HepG2 (cell line): ENCODE measurements at regions of chr6 and their contacts with region 1.

Region 1: GRCh38 chr6:154928325-154928922 is 66.7 kb upstream of the TIAM2 start:
- DNase-seq: peak; percentile 73
- ATAC-seq: peak; percentile 78
- H3K4me3 ChIP-seq: no peak overlapping the region
- H3K27ac ChIP-seq: no peak overlapping the region
- H3K4me1 ChIP-seq: peaks cover 25% of the 10 kb centered on the region
- H3K27me3 ChIP-seq: no peaks in the 10 kb centered on the region
- CTCF ChIP-seq: peak; percentile 93
- EP300 ChIP-seq: no peak
- POLR2A ChIP-seq: no peak
- RAD21 ChIP-seq: peak; percentile 95

Region 2: GRCh38 chr6:154675602-154676088 is 252.8 kb before region 1 on chr6:
- CTCF ChIA-PET with region 1: interaction called, 3 read pairs
- POLR2A ChIA-PET with region 1: no interaction called
- in situ Hi-C with region 1: no loop called
- intact Hi-C with region 1: loop called (anchors 1 kb)
- DNase-seq: peak; percentile 95
- ATAC-seq: peak; percentile 99
- H3K4me3 ChIP-seq: no peak overlapping the region
- H3K27ac ChIP-seq: no peak overlapping the region
- H3K4me1 ChIP-seq: peaks cover 5% of the 10 kb centered on the region; the same call in 1 of the 2 replicates
- H3K27me3 ChIP-seq: no peaks in the 10 kb centered on the region
- CTCF ChIP-seq: peak; percentile 98
- EP300 ChIP-seq: no peak
- POLR2A ChIP-seq: no peak
- RAD21 ChIP-seq: peak; percentile 97

Region 3: GRCh38 chr6:154960299-154960843 is 31.9 kb after region 1 on chr6:
- CTCF ChIA-PET with region 1: no interaction called
- POLR2A ChIA-PET with region 1: interaction called, 6 read pairs
- in situ Hi-C with region 1: no loop called
- intact Hi-C with region 1: loop called (anchors 2 kb)
- DNase-seq: peak; percentile 93
- ATAC-seq: peak; percentile 81
- H3K4me3 ChIP-seq: peak overlapping the region in 1 of 3 experiments; percentile 27; a peak in 2 of 6 replicates
- H3K27ac ChIP-seq: peak overlapping the region; percentile 57
- H3K4me1 ChIP-seq: peaks cover 65% of the 10 kb centered on the region
- H3K27me3 ChIP-seq: no peaks in the 10 kb centered on the region
- CTCF ChIP-seq: no peak
- EP300 ChIP-seq: peak in 1 of 2 experiments; percentile 79; a peak in 2 of 4 replicates
- POLR2A ChIP-seq: 0 out of 4 replicates have a peak, but pooled peaks of 1 of the 2 experiments have one; percentile 14
- RAD21 ChIP-seq: peak; percentile 29; the same call in 1 of the 2 replicates

Region 4: GRCh38 chr6:155003476-155003875 is 75.1 kb after region 1 on chr6:
- CTCF ChIA-PET with region 1: interaction called, 3 read pairs
- POLR2A ChIA-PET with region 1: no interaction called
- in situ Hi-C with region 1: no loop called
- intact Hi-C with region 1: loop called (anchors 2 kb)
- DNase-seq: no peak
- ATAC-seq: peak; percentile 21; the same call in 2 of the 3 replicates
- H3K4me3 ChIP-seq: no peak overlapping the region
- H3K27ac ChIP-seq: no peak overlapping the region
- H3K4me1 ChIP-seq: peaks cover 37% of the 10 kb centered on the region
- H3K27me3 ChIP-seq: no peaks in the 10 kb centered on the region
- CTCF ChIP-seq: no peak
- EP300 ChIP-seq: no peak
- POLR2A ChIP-seq: no peak
- RAD21 ChIP-seq: no peak

Region 5: DNA sequence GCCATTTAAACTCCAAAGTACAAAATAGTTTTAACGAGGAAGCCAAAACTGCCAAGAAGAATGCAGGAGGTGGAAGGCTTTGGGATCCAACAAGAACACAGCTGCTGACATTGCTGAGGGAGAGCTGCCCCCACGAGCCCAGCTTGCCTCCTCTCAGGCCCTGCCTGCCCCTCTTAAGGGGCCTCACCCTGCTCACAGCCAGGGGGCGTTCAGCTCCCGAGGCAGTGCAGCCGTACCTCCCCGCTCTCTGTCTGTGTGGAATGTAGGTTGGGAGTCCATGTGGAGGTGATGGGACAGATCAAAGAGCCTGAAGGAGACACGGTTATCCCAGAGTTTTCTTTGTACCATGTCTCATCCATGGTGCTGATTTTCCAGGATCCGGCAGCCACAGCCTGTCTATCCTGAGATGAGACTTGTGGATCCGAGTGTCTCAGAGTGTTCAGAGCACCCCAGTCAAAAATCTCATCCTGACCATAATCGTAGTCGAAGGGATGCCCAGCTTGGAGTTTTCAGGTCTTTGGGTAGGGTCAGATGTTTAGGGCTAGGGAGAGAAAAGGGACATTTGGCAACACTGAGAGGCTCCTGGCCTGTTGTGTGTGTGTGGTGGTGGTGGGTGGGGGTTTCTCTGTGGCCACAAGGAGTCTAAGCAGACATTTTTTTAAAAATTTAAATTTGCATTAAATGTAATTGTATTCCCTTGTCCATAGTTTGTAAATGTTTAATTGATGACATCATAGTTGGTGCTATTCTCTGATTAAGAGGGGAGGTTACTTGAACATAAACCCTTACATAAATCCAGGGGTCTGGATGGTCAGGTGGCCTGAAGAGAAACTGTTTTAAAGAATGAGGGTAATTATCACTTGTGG is 224.0 kb after region 1 on chr6:
- CTCF ChIA-PET with region 1: no interaction called
- POLR2A ChIA-PET with region 1: no interaction called
- in situ Hi-C with region 1: no loop called
- intact Hi-C with region 1: loop called (anchors 1 kb)
- DNase-seq: peak; percentile 75
- ATAC-seq: peak; percentile 99
- H3K4me3 ChIP-seq: no peak overlapping the region
- H3K27ac ChIP-seq: no peak overlapping the region
- H3K4me1 ChIP-seq: peaks cover 31% of the 10 kb centered on the region
- H3K27me3 ChIP-seq: no peaks in the 10 kb centered on the region
- CTCF ChIP-seq: peak; percentile 90
- EP300 ChIP-seq: no peak
- POLR2A ChIP-seq: no peak
- RAD21 ChIP-seq: peak; percentile 71

Region 6: GRCh38 chr6:155185544-155185943 is 257.1 kb after region 1 on chr6:
- CTCF ChIA-PET with region 1: no interaction called
- POLR2A ChIA-PET with region 1: no interaction called
- in situ Hi-C with region 1: no loop called
- intact Hi-C with region 1: no loop called
- DNase-seq: no peak
- ATAC-seq: peak; percentile 41
- H3K4me3 ChIP-seq: no peak overlapping the region
- H3K27ac ChIP-seq: no peak overlapping the region
- H3K4me1 ChIP-seq: peaks cover 32% of the 10 kb centered on the region
- H3K27me3 ChIP-seq: no peaks in the 10 kb centered on the region
- CTCF ChIP-seq: no peak
- EP300 ChIP-seq: no peak
- POLR2A ChIP-seq: no peak
- RAD21 ChIP-seq: no peak

Region 7: DNA sequence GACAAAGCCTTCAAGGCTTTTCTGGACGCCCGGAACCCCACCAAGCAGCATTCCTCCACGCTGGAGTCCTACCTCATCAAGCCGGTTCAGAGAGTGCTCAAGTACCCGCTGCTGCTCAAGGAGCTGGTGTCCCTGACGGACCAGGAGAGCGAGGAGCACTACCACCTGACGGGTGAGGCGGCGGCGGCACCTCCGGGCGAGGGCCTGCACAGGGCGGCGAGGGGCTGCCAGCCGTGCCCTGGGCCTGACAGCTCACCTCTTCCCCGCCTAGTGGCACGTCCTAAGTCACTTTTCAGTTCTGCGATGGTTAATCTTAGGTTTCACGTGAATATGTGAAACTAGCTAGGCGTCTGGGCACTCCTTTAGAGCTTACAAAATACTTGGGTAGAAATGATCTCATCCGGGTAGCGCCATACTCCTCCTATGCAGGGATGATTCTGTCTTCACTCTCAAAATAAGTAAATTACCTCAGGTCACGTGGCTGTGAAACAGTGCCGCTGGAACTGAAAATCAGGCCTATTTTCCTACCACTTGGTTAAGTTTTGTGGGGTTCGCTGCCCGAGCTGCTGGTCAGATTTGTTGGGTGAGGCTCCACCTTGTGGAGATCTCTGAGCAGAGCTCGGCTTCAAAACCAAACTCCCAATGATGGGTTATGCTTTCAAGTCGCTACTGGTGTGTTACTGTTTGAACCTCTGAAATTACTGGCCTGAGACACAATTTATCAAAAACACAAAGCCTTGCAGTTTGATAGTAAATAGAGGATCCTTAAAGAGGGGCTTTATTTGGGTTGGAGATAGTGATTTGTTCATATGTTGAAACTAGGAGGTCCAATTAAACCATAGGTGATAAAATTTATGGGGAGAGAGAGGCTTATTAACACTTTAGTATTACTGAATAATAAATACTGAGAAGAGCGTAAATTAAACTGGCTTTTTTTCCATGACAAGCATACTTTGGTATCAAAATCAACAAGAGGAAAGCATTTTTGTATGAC is 319.9 kb after region 1 on chr6:
- CTCF ChIA-PET with region 1: interaction called, 3 read pairs
- POLR2A ChIA-PET with region 1: no interaction called
- in situ Hi-C with region 1: no loop called
- intact Hi-C with region 1: loop called (anchors 10 kb)
- DNase-seq: peak; percentile 43
- ATAC-seq: peak; percentile 51
- H3K4me3 ChIP-seq: no peak overlapping the region
- H3K27ac ChIP-seq: no peak overlapping the region
- H3K4me1 ChIP-seq: peaks cover 8% of the 10 kb centered on the region; the same call in 1 of the 2 replicates
- H3K27me3 ChIP-seq: no peaks in the 10 kb centered on the region
- CTCF ChIP-seq: peak; percentile 61
- EP300 ChIP-seq: no peak
- POLR2A ChIP-seq: peak in 1 of 2 experiments; percentile 57; a peak in 2 of 4 replicates
- RAD21 ChIP-seq: no peak